GM13976 (cell line): ENCODE measurements at regions of chr15 and their contacts with region 1.

Region 1: DNA sequence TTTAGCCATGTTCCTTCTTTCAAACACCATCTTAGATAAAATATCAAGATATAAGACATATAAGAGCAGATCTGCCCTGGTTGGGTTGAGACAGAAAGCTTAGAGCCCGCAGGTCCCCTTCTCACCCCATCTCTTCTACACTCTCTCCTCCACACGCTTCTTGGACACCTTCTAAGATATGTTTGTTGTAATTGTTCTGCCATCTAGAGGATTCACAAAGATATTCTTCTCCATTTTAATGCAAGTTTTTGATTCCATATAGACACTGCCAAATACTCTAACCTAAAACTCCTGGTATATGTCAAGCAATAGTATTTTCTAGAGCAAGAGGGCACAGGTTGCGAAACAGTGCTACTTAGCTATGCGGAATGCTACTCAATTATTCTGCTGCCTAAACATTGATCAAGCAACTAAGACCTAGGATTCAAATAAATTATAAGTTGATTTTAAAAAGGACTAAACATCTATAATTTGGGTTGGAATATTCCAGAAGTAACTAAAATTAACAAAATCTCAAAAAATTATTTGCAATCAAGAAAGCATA is 6.8 kb downstream of the CHRM5 start:
- DNase-seq: no peak
- CTCF ChIP-seq: no peak

Region 2: GRCh38 chr15:33737687-33738601 is 237.2 kb before region 1 on chr15:
- in situ Hi-C with region 1: loop called (anchors 10 kb)
- DNase-seq: peak; percentile 36
- CTCF ChIP-seq: peak; percentile 81

Region 3: GRCh38 chr15:34031987-34032760 is 57.1 kb after region 1 on chr15:
- in situ Hi-C with region 1: no loop called
- DNase-seq: no peak
- CTCF ChIP-seq: no peak